ENCODE measurements at regions of chr7 and their contacts with region 1.

Region 1: DNA sequence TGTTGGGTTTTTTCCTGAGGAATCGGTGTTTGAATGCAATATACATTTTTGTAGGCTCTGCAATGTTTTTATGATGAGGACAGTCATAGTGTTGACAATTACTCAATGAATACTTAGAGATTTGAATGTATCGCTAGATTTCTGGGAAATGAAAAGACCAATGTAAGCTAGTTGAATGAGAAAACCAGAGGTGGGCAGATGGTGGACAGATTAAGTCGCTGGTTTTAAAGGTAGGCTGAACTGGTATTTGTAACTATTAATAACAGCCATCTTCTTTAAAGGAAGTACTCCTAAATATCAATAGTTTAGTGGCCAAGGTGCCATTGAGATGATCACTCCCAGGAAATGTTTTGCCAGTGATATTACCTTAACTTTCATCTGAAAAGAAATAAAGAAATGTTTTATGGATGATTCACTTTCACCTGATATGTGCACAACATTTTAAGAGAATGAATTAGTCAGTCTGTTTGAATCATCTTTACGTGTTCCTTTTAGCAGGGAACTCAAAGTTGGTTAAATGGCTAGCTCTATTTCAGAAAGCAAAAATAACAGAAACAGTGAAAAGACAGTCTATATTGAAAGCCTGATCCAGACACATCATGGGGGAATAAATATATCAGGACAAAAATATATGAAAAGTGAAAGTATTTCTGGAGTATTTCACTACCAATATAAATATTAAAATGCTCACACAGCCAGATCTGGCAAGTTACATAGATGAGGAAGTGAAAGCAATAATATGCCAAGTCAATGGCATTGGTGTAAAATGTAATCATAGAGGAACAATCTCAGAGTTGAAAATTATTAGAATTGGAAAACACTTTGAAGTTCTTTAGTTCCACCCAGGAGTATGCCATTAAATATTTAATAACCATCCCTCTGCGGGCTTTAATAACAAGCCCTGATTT is 20.7 kb downstream of the MET start:
- DNase-seq: peak in 1 of 2 experiments; percentile 89
- H3K4me3 ChIP-seq: peak overlapping the region; percentile 36; the same call in 1 of the 2 replicates
- H3K27ac ChIP-seq: peak overlapping the region; percentile 89
- H3K4me1 ChIP-seq: peaks cover 46% of the 10 kb centered on the region
- H3K27me3 ChIP-seq: no peaks in the 10 kb centered on the region
- CTCF ChIP-seq: no peak

Region 2: DNA sequence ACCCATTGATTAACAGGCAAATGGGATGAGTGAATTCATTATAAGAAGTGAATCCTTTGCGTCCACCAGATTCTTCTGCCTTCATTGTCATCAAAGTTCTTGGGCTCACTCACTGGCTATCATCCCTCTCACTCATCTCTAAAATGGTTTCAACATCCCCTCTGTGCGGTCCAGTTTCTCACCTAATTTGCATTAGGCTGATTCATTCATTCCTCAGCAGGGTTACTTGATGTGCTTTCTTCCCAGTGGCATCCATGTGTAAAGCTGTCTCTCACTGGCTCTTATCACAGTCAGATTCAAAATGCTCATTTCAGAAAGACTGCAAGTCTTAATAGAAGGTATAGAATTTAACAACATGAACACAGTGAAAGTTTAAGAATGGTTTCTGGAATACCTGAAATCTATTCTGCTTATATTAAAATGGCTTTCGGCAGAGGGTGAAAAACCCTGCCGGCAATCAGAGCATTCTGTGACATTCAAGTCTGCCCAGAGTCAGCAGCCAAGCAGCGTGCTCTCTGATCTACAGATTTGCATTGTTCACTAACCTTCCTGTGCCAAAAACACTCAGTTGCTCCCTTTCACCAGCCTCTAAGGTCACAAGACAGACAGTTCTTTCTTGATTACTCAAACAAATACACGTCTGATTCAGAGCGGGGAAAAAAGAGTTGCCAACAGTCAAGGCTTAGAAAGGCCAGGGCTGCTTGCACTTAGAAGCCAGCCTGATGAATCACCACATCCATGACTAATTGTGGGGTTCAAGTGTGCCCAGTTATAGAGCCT is 375.6 kb before region 1 on chr7:
- CTCF ChIA-PET with region 1: no interaction called
- POLR2A ChIA-PET with region 1: no interaction called
- intact Hi-C with region 1: loop called (anchors 5 kb)
- DNase-seq: peak; percentile 76 to 97
- H3K4me3 ChIP-seq: peak overlapping the region; percentile 29; the same call in 1 of the 2 replicates
- H3K27ac ChIP-seq: peak overlapping the region; percentile 88
- H3K4me1 ChIP-seq: peaks cover 31% of the 10 kb centered on the region
- H3K27me3 ChIP-seq: no peaks in the 10 kb centered on the region
- CTCF ChIP-seq: no peak

Region 3: DNA sequence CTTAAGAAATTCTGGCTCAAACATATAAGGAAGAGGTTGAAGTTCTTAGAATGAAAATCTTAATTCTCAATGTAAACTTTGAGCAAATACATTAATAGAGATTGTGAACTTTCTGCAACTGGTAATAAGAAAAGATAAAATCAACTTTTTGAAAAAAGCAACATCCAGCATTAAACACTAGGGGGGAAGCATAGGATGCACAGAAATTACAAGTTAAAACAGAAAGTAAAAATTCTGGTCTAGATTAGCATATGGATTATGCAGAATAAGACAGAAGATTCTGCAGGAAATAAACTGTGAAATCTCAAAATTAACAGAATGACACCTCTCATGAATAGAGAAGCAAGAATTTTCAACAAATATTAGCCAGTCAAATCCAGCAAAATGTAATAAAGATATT is 231.2 kb before region 1 on chr7:
- CTCF ChIA-PET with region 1: no interaction called
- POLR2A ChIA-PET with region 1: no interaction called
- intact Hi-C with region 1: loop called (anchors 5 kb)
- DNase-seq: no peak
- H3K4me3 ChIP-seq: no peak overlapping the region
- H3K27ac ChIP-seq: no peak overlapping the region
- H3K4me1 ChIP-seq: peaks cover 26% of the 10 kb centered on the region
- H3K27me3 ChIP-seq: no peaks in the 10 kb centered on the region
- CTCF ChIP-seq: no peak

Region 4: DNA sequence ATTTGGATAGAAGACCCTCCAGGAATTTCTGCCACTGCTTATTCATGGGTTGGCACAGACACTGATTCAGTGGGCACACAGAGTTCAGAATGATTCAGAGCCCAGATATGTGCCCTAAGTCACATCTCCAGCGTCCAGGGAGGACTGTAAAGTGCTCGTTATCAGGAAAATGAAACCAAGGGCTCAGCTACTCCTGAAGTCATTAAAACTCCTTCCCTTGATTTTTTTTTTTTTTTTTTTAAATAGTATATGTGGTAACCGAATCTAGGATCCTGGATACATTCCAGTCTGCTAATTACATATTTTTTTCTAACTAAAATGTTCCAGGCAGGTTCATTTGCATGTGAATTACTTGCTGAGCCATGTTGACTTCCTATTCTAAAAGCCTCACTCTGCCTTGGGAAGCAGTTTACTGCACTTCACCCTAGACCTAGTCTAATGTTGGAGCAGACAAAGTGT is 14.0 kb after region 1 on chr7:
- CTCF ChIA-PET with region 1: no interaction called
- POLR2A ChIA-PET with region 1: interaction called, 11 read pairs
- intact Hi-C with region 1: loop called (anchors 1 kb)
- DNase-seq: peak; percentile 71 to 80
- H3K4me3 ChIP-seq: peak overlapping the region; percentile 43; the same call in 1 of the 2 replicates
- H3K27ac ChIP-seq: peak overlapping the region; percentile 82
- H3K4me1 ChIP-seq: peaks cover 67% of the 10 kb centered on the region
- H3K27me3 ChIP-seq: no peaks in the 10 kb centered on the region
- CTCF ChIP-seq: no peak

Region 5: DNA sequence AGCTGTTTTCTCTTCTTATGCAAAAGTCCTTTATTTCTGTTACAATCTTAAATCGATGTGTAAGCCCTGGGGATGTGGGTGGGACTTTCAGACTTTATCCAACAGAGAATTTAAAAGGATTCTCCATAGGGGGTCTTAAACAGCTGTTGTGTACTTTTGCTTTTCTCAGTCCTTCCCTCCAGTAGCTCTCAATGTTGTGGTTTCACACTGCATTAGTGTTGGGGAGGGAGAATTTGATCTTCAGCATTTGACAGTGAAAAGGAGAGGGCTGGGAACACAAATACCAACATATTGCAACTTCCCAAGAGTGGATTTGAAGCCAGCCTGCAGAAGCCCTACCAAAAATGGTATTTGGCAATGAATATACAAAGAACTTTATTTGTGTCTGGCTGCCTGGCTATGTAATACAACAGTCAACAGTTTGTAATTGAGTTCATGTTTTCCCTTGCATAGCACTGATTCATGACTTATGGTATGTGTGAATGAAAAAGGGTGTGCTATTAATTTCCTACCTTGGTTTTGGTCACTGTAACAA is 89.6 kb after region 1 on chr7:
- CTCF ChIA-PET with region 1: interaction called, 3 read pairs
- POLR2A ChIA-PET with region 1: no interaction called
- intact Hi-C with region 1: loop called (anchors 1 kb)
- DNase-seq: peak in 1 of 2 experiments; percentile 90
- H3K4me3 ChIP-seq: no peak overlapping the region
- H3K27ac ChIP-seq: peak overlapping the region; percentile 85
- H3K4me1 ChIP-seq: peaks cover 88% of the 10 kb centered on the region
- H3K27me3 ChIP-seq: no peaks in the 10 kb centered on the region
- CTCF ChIP-seq: no peak

Measured in PC-9 (cell line).